Panc1 (cell line): ENCODE measurements at regions of chr3 and their contacts with region 1.

Region 1: DNA sequence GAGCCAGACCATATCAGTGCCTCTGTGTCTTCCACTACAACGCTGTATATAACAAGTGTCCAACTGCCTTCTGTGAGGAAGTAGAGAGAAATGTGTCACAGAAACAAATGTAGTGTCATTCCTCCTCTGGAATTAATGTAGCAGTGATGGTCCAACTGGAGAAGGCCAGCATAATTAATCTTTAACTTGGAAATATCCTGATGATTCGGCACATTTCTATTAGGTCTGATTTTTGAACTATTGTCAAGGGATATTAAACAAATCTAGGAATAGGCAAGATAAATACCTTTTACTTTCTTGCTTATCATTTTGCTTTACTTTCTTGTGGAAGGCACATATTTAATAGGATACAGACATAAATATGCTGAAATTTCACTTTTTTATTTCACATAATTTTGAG is 446.2 kb upstream of the ALCAM start:
- DNase-seq: no peak
- ATAC-seq: no peak
- H3K4me3 ChIP-seq: no peak overlapping the region
- H3K27ac ChIP-seq: no peak overlapping the region
- H3K4me1 ChIP-seq: no peaks in the 10 kb centered on the region
- H3K27me3 ChIP-seq: no peaks in the 10 kb centered on the region
- CTCF ChIP-seq: no peak

Region 2: GRCh38 chr3:104987859-104988258 is 67.3 kb after region 1 on chr3:
- CTCF ChIA-PET with region 1: no interaction called
- POLR2A ChIA-PET with region 1: no interaction called
- in situ Hi-C with region 1: no loop called
- intact Hi-C with region 1: loop called (anchors 10 kb)
- DNase-seq: no peak
- ATAC-seq: no peak
- H3K4me3 ChIP-seq: no peak overlapping the region
- H3K27ac ChIP-seq: no peak overlapping the region
- H3K4me1 ChIP-seq: no peaks in the 10 kb centered on the region
- H3K27me3 ChIP-seq: no peaks in the 10 kb centered on the region
- CTCF ChIP-seq: no peak; the same call in 1 of the 2 replicates